ENCODE measurements at regions of chr10 and their contacts with region 1.

Region 1: DNA sequence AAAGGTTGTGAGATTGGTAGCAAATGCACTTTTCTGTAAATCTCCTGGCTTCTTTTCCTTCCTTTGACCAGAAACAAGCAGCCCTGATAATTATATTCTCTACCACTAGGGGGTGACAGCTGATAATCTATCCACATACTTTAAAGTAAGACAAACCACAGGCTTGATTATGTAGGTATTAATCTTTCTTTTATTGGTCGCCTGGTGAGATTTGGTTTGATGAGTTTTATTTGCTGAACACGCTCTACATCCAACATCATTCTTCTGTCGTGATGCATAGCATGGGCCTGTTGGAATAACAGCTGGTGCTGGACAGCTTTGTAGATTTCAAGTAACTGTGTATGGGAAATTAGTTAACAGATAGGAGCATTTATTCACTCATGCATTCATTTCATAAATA is 63.5 kb downstream of the ZNF365 start:
- DNase-seq: peak in 1 of 2 experiments; percentile 67
- H3K4me3 ChIP-seq: no peak overlapping the region
- H3K27ac ChIP-seq: no peak overlapping the region
- H3K4me1 ChIP-seq: peaks cover 17% of the 10 kb centered on the region
- H3K27me3 ChIP-seq: no peaks in the 10 kb centered on the region
- CTCF ChIP-seq: peak; percentile 95

Region 2: GRCh38 chr10:62323751-62324150 is 113.9 kb before region 1 on chr10:
- CTCF ChIA-PET with region 1: no interaction called
- POLR2A ChIA-PET with region 1: no interaction called
- intact Hi-C with region 1: loop called (anchors 5 kb)
- DNase-seq: peak; percentile 47 to 95
- H3K4me3 ChIP-seq: no peak overlapping the region
- H3K27ac ChIP-seq: peak overlapping the region; percentile 15; the same call in 1 of the 2 replicates
- H3K4me1 ChIP-seq: peaks cover 11% of the 10 kb centered on the region
- H3K27me3 ChIP-seq: no peaks in the 10 kb centered on the region
- CTCF ChIP-seq: no peak

Region 3: DNA sequence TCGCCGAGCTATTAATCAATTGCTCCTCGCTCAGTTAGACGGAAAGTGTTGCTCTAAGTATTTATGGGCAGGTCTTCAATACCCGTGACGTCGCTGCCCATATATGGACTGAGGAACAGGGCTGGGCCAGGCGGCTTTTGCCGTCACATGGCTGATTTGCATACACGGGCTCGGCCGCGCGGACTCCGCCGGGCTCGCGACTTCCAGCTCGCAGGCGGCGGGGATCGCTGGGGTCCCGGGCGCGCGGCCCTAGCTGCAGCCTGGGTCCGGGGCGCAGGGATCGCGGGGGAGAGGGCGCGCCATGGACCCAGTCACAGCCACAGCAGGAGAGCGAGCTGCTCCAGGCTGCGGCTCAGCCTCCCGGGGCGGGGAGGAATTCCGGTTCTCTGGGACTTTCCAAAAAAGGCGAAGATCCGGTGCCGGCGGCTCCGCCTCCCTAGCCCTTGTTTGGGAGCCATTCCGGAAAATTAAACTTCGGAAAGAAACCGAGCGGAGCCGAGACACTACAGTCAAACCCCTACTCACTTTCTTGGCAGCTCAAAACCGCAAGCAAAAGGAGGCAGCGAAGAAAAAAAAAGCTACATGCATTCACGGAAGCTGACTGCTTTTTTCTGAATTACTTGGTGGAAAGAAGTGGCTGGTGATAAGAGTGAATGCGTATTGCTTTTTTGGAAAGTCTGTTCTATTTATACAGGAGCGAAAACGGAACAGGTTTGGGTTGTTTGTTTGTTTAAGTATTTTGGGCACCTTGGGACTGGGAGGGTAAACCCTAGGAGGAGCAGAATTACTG is 378.8 kb after region 1 on chr10 and contains the start of gene EGR2:
- CTCF ChIA-PET with region 1: interaction called, 5 read pairs
- POLR2A ChIA-PET with region 1: no interaction called
- intact Hi-C with region 1: loop called (anchors 5 kb)
- DNase-seq: peak; percentile 90 to 93
- H3K4me3 ChIP-seq: peak within 1 kb of the TSS; percentile 94
- H3K27ac ChIP-seq: peak within 1 kb of the TSS; percentile 28
- H3K4me1 ChIP-seq: peaks cover 4% of the 10 kb centered on the region; the same call in 1 of the 2 replicates
- H3K27me3 ChIP-seq: no peaks in the 10 kb centered on the region
- CTCF ChIP-seq: no peak
- total RNA-seq, gene EGR2: 0.24 and 0.53 TPM in 2 replicates

Region 4: GRCh38 chr10:63157845-63158624 is 720.3 kb after region 1 on chr10:
- CTCF ChIA-PET with region 1: no interaction called
- POLR2A ChIA-PET with region 1: no interaction called
- intact Hi-C with region 1: loop called (anchors 1 kb)
- DNase-seq: peak; percentile 39 to 76
- H3K4me3 ChIP-seq: no peak overlapping the region
- H3K27ac ChIP-seq: 0 out of 2 replicates have a peak overlapping the region, but pooled peaks have one; percentile 3
- H3K4me1 ChIP-seq: no peaks in the 10 kb centered on the region
- H3K27me3 ChIP-seq: no peaks in the 10 kb centered on the region
- CTCF ChIP-seq: peak; percentile 95